Aorta (tissue), 5 donors: ENCODE measurements at regions of chr2 and their contacts with region 1.

Region 1: GRCh38 chr2:212135739-212136138 is 402.9 kb downstream of the ERBB4 start:
- DNase-seq: no peak
- ATAC-seq: no peak
- H3K4me3 ChIP-seq: no peak overlapping the region
- H3K27ac ChIP-seq: no peak overlapping the region
- H3K4me1 ChIP-seq: peaks cover 0 to 4% of the 10 kb centered on the region in 2 donors
- H3K27me3 ChIP-seq: no peaks in the 10 kb centered on the region

Region 2: DNA sequence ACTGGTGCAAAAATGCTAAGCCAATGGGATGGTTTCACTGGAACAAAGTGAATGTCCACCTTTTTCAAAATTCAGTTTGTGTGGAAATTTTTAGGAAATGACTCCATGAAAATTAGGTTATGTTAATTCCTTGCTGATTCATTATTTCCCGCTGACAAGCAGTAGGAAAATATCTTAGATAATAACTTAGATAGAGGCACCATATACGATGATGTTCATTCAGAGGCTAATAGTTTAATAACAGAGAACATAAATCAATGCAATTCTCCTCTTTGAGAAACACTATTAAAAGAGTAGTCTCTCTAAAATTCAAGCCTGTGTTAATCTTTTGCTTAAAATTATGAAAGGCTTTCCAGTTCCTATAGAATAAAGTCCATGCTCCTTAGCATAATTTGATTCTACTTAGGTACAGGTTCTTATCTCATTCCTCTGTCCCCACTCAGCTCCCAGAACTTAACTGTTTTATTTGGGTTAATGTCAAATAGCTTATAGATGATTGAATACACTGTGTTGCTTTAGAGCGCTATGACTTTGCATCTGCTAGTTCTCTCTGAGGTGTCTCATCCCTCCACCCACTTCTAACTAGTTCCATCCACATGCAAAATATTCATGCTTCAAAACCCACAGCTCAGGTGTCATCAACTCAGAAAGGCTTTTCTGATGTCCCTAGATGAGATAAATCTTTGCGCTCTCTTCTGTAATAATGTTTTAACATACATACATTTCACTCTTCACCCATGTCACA is 100.7 kb before region 1 on chr2:
- intact Hi-C with region 1: loop called (anchors 5 to 10 kb)
- DNase-seq: no peak
- ATAC-seq: no peak
- H3K4me3 ChIP-seq: no peak overlapping the region
- H3K27ac ChIP-seq: no peak overlapping the region
- H3K4me1 ChIP-seq: no peaks in the 10 kb centered on the region
- H3K27me3 ChIP-seq: no peaks in the 10 kb centered on the region